Adrenal gland (tissue), 19 donors: ENCODE measurements at regions of chr2 and their contacts with region 1.

Region 1: DNA sequence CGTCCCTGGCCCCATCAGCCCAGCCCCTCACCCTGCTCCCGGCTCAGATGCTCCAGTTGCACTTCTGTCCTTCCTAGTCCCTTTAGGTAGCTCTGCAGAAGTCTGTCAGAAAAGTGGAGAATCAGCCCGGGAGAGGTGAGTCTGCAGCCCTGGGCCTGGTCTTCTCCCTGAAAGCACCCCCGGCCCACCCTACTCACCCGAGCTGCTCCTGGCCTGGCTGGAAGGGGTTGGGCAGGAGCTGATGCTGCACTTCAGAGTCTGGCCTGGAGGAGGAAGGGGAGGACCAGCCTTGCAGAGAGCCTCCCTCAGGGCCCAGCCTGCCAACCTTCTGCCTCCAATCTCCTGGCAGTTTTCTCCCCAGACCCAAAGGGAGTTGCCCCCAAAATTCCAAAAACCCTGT is 15.8 kb downstream of the KHK start:
- DNase-seq: no peak
- H3K4me3 ChIP-seq: no peak overlapping the region
- H3K27ac ChIP-seq: no peak overlapping the region
- H3K4me1 ChIP-seq: no peaks in the 10 kb centered on the region
- H3K27me3 ChIP-seq: peaks cover 4% of the 10 kb centered on the region
- CTCF ChIP-seq: no peak
- POLR2A ChIP-seq: no peak

Region 2: DNA sequence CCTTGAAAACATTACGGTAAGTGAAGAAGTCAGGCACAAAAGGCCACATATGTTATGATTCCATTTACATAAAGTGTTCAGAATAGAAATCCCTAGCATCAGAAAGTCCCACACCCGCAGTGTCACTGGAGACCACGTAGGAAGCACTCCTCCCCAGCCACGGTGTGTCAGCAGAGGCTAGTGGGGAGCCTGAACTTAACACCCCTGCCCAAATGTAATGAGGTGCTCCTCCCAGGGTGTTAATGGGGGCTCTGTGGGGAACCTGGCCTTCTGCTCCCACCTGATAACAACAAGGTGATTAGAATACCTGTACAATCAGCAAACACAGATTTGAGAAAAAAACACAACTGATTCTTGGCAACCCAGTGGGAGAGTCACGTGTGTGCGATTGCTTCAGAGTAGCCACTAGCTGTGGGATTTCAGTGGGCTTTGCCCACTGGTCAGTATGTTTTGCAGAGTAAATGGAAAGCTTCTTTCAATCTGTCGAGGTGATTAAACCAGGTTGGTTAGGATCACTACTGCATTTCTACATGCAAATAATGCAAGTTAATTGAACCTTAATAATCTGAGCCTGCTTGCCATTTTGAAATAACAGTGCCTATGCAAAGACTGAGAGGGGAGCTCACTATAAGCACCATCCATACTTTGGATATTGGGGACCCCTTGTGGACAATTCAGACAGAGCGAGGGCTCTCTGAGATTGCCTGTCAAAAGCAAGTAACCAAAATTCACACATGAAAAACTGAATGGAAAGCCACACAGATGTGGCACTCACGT is 88.9 kb after region 1 on chr2:
- intact Hi-C with region 1: loop called (anchors 2 to 5 kb)
- DNase-seq: peak; percentile 40 to 84 (median 55)
- H3K4me3 ChIP-seq: no peak overlapping the region
- H3K27ac ChIP-seq: no peak overlapping the region
- H3K4me1 ChIP-seq: no peaks in the 10 kb centered on the region
- H3K27me3 ChIP-seq: no peaks in the 10 kb centered on the region
- CTCF ChIP-seq: peak; percentile 32 to 69 (median 64)
- POLR2A ChIP-seq: no peak